ENCODE measurements at regions of chr1 and their contacts with region 1.

Region 1: DNA sequence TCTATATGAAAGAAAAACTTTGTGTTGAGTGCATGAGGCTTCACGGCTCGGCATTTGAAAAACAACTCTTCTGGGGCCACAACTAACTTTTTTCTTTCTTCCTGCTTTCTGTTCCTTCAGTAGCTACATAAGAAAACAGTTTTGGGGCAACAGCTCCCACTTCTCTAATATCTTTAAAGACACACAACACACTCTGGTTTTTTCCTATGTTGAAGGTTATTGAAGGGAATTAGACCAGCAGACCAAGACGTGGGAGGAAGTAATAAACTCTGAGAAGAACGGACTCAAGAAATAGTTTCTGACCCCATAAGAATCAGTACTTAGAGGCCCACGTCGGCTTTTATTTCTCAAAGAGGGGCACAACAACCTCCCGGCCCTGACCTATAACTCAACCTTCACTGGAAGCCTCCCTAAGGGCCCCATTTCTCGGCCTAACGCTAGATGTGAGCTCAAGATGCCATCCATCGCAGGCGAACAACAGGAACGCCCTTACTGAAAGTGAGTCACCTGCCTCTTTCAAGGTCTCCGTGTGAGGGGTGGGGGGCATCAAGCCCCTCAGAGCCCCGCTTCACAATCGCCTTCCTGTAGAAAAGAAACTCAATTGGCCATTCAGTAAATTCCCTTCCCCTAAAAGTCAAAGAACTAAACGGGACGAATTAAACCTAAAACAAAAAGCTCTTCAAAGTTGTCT is 844 bp downstream of the ZMYM6 start:
- DNase-seq: peak; percentile 38
- ATAC-seq: peak; percentile 45
- H3K4me3 ChIP-seq: peak overlapping the region; percentile 98
- H3K27ac ChIP-seq: peak overlapping the region; percentile 95
- H3K4me1 ChIP-seq: peaks cover 15% of the 10 kb centered on the region
- H3K27me3 ChIP-seq: no peaks in the 10 kb centered on the region
- CTCF ChIP-seq: no peak

Region 2: GRCh38 chr1:35016406-35016805 is 14.5 kb before region 1 on chr1:
- CTCF ChIA-PET with region 1: interaction called, 3 read pairs
- POLR2A ChIA-PET with region 1: no interaction called
- intact Hi-C with region 1: loop called (anchors 2 kb)
- DNase-seq: no peak
- ATAC-seq: no peak
- H3K4me3 ChIP-seq: no peak overlapping the region
- H3K27ac ChIP-seq: no peak overlapping the region
- H3K4me1 ChIP-seq: no peaks in the 10 kb centered on the region
- H3K27me3 ChIP-seq: no peaks in the 10 kb centered on the region
- CTCF ChIP-seq: no peak

Region 3: GRCh38 chr1:35079003-35079930 is 48.4 kb after region 1 on chr1 and contains the start of gene ZMYM1:
- CTCF ChIA-PET with region 1: no interaction called
- POLR2A ChIA-PET with region 1: interaction called, 3 read pairs
- intact Hi-C with region 1: loop called (anchors 5 kb)
- DNase-seq: peak; percentile 80
- ATAC-seq: peak; percentile 94
- H3K4me3 ChIP-seq: peak within 1 kb of the TSS; percentile 93
- H3K27ac ChIP-seq: peak within 1 kb of the TSS; percentile 77
- H3K4me1 ChIP-seq: peaks cover 14% of the 10 kb centered on the region
- H3K27me3 ChIP-seq: no peaks in the 10 kb centered on the region
- CTCF ChIP-seq: no peak
- total RNA-seq, gene ZMYM1: 13.6 and 17.0 TPM in 2 replicates

Region 4: DNA sequence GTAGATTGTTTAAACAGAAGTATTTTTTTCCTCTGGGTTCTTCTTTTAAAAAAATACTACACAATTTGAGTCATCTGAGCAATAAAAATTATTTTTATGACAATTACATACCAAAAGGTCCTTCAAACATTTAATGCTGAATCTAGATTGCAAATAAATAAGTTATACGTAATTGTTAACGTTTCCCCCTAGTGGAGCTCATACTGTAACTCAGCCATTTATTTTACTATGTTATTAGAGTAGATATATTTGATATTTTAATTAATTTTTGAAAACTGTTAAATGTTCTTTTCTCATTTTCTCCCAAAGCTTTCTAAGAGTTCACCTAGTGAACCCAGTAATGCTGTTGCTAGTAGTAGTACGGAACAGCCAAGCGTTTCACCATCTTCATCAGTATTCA is 81.8 kb after region 1 on chr1:
- CTCF ChIA-PET with region 1: no interaction called
- POLR2A ChIA-PET with region 1: no interaction called
- intact Hi-C with region 1: loop called (anchors 2 kb)
- DNase-seq: peak; percentile 31
- ATAC-seq: peak; percentile 13; the same call in 1 of the 2 replicates
- H3K4me3 ChIP-seq: no peak overlapping the region
- H3K27ac ChIP-seq: no peak overlapping the region
- H3K4me1 ChIP-seq: peaks cover 13% of the 10 kb centered on the region
- H3K27me3 ChIP-seq: no peaks in the 10 kb centered on the region
- CTCF ChIP-seq: peak; percentile 40; the same call in 1 of the 2 replicates

Region 5: GRCh38 chr1:35192853-35193664 is 162.2 kb after region 1 on chr1 and contains the start of gene SFPQ:
- CTCF ChIA-PET with region 1: no interaction called
- POLR2A ChIA-PET with region 1: no interaction called
- intact Hi-C with region 1: loop called (anchors 2 kb)
- DNase-seq: peak; percentile 98
- ATAC-seq: peak; percentile 89
- H3K4me3 ChIP-seq: peak within 1 kb of the TSS; percentile 80
- H3K27ac ChIP-seq: peak within 1 kb of the TSS; percentile 59
- H3K4me1 ChIP-seq: 0 out of 2 replicates have a peak, but pooled peaks cover 11% of the 10 kb centered on the region
- H3K27me3 ChIP-seq: no peaks in the 10 kb centered on the region
- CTCF ChIP-seq: no peak
- total RNA-seq, gene SFPQ: 249 and 322 TPM in 2 replicates

Region 6: DNA sequence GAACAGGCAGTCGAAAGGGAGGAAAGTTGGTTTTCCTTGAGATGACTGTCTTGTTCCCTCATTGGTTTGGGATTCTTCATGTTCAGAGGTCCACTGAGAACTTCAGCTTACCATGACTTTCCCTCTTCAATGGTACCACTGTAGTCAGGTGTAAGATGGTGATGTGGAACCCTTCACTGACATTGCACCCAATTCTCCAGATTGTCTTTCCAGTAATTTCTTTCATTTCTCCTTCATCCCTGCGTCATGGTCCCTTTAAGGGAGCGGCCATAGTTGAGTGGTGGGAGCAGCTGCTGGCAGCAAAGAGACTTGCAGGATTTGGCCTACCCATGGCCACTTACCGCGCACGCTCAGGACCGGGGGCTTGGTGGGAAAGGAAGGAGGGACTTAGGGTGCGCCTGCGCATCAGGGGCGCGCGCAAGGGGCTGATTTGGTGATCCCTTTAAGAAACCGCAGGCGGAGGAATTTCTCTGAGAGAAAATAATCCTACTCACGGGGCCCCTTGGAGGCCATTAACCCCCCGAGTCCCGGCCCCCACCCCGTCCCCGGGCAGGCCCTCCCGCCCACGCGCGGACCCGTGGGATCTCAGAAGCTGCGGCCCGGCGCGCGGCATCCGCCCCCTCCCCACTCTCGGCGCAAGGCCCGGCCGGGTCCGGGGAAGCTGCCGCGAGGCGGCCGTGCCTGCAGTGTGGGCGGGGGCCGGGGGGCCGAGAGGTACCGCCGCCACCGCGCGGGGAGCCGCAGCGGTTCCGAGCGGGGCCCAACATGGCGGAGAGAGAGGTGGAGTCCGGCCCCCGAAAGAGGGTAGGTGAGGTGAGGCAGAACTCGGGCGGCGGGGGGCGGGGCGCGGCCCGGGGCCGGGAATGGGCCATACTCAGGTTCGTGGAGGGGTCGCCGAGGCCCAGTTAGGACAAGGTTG is 237.6 kb after region 1 on chr1 and contains the start of gene ZMYM4:
- CTCF ChIA-PET with region 1: no interaction called
- POLR2A ChIA-PET with region 1: no interaction called
- intact Hi-C with region 1: loop called (anchors 10 kb)
- DNase-seq: peak; percentile 95
- ATAC-seq: peak; percentile 89
- H3K4me3 ChIP-seq: peak within 1 kb of the TSS; percentile 76
- H3K27ac ChIP-seq: peak within 1 kb of the TSS; percentile 51
- H3K4me1 ChIP-seq: peaks cover 31% of the 10 kb centered on the region
- H3K27me3 ChIP-seq: no peaks in the 10 kb centered on the region
- CTCF ChIP-seq: no peak
- total RNA-seq, gene ZMYM4: 28.5 and 31.0 TPM in 2 replicates

Measured in PC-3 (cell line).